ENCODE measurements at regions of chr5 and their contacts with region 1.

Region 1: GRCh38 chr5:179137643-179138567 is 77.7 kb downstream of the ZNF354C start:
- DNase-seq: peak; percentile 80

Region 2: DNA sequence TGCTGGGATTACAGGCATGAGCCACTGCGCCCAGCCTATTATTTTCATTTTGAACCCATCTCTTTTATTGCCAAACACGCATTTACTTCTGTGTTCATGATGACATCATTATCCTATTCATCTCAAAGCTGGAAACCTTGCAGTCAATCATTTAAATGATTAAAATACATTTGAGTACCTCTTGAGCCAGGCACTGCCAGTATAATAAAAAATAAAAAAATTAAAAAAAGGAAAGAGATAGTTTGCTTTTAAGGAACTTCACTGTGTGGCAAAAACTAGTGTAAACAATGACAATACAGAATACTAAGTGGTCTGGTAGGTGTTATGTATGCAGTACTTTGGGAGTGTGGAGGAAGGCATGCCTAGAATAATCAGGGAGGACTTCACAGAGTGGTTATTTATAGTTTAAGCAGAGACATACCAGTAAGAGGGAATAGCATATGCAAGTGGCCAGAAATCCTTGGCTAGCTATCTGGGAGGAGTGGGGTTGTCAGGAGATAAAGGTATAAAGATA is 1995.8 kb before region 1 on chr5:
- intact Hi-C with region 1: loop called in 1 of 2 experiments (anchors 5 kb)
- DNase-seq: no peak

Region 3: DNA sequence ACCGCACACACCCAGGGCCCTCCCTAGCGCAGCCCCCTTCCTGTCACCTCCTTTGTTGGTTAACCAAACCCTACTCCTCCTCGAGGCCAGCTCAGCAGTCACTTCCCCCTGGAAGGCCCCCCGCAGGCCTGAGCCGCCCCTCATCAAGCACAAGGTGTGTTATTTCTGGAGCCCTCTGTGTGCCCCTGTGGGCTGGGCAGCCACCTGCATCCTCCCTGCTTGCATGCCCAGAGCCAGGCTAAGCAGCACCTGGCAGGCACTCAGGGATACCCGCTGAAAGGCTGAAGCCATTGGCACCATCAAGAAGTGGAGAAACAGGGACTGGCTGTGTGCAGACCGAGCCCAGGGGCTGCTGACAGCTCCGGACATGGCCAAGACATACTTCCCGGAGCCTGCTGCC is 44.1 kb after region 1 on chr5:
- intact Hi-C with region 1: loop called in 1 of 2 experiments (anchors 1 kb)
- DNase-seq: no peak

Measured in posterior vena cava (tissue), 2 donors.